Activated CD4-positive, alpha-beta memory T cell treated with anti-CD3 and anti-CD28 coated beads, Interleukin-2, amount 10 ng/mL, durations not matched to agents 7 days and 5 days (primary cell): ENCODE measurements at regions of chr6 and their contacts with region 1.

Region 1: DNA sequence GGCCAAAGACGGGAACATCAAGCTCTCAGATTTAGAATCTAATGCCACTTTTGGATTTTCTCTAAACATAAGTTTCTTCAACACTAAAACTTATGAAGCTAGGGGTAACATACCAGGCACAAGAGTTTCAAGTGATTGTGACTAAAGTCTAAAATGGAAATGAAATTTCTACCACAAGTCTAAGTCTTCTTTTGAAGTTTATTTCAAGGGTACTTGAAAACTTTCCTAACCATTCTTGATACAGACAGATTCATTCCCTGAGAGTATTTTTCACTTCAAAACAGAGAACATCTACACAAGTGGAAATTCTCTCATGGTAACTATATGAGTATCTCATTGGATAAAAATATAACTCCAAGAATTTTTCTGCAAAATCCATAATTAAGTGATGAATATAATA is 56.2 kb downstream of the BTBD9 start:
- DNase-seq: no peak
- H3K4me3 Mint-ChIP-seq: no peak overlapping the region
- H3K27ac Mint-ChIP-seq: no peak overlapping the region
- H3K4me1 Mint-ChIP-seq: peaks cover 4% of the 10 kb centered on the region
- H3K27me3 Mint-ChIP-seq: no peaks in the 10 kb centered on the region

Region 2: DNA sequence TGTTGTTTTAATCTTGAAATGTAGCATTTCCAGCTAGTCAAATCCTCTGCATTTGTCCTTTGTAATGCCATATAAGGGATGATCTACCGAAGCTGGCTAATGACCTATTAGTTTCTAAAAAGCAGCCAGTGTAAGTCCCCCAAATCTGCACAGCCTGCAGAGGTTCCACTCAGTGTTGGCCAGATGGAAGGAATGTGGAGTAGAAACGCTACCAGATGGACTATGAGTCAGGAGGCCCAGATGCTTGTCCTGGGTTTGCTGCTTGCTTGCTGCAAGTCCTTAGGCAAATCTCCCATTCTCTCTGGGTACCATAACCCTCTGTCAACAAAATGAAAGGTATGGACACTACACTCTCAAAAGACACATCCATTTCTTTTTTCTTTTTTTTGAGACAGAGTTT is 93.6 kb before region 1 on chr6:
- CTCF ChIA-PET with region 1: no interaction called
- POLR2A ChIA-PET with region 1: no interaction called
- DNase-seq: no peak
- H3K4me3 Mint-ChIP-seq: no peak overlapping the region
- H3K27ac Mint-ChIP-seq: no peak overlapping the region
- H3K4me1 Mint-ChIP-seq: peaks cover 8% of the 10 kb centered on the region
- H3K27me3 Mint-ChIP-seq: no peaks in the 10 kb centered on the region

Region 3: DNA sequence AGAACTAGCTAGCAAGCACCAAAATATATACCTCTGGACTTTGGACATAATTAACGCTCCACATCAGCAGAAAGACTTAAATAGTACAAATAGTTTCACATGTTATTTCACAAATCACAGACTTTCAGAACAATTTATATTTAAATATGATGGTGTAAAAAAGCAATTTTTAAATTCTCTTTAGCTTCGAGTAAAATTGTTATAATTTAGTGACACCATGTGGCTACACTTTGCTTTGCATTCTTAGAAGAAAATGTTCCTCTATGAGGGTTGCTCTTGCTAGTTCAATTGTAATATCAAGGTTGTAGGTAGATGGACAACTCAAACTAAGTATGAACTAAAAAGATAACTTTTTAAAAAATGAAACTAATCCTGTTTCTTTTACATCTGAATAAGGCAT is 12.8 kb before region 1 on chr6:
- CTCF ChIA-PET with region 1: interaction called, 11 read pairs
- POLR2A ChIA-PET with region 1: no interaction called
- DNase-seq: no peak
- H3K4me3 Mint-ChIP-seq: no peak overlapping the region
- H3K27ac Mint-ChIP-seq: no peak overlapping the region
- H3K4me1 Mint-ChIP-seq: peaks cover 19% of the 10 kb centered on the region
- H3K27me3 Mint-ChIP-seq: no peaks in the 10 kb centered on the region